ENCODE measurements at regions of chr14 and their contacts with region 1.

Region 1: DNA sequence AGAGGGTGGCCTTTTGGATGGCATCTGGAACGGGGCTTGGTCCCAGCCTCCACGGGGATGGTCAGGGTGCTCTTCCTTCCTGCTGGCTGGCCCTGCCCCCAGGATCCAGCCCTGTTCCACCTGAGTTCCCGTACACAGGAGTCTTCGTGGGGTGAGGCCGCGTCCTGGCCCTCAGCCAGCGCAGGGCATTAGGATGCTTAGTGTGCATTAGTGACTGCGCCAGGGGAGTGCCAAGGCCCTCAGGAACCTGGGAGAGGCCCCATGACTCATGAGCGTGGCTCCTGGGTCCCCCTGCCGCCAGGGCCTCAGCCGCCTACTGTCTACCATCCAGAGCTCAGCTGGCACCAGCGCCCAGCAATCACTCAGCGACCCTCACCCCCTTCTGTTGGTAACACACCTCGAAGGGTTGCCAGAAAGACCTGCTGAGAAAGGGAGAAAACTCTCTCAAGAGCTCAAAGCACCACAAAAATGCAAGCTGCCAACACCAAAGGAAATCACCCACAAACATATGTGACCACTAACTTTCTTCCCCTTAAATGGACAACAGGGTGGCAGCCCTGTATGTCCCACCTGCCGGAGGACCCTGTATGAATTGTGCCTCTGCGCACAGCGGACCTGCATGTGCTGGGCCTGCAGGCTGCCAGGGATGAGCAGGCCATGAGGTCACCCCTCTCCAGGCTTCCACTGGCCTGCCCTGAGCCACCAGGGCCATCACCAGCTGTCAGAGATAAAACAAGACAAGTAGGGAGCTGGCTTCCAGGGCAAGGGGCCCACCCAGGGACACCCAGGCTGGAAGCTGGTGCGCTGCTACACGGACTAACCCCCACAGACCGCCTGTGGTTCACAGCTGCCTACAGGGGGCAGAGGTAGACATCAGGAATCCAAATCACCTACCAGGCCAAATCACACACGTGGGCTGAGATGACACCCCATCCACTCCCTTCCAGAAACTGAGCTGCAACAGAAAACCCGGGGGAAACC is 28.7 kb downstream of the CCDC85C start:
- DNase-seq: peak; percentile 48
- H3K4me3 ChIP-seq: no peak overlapping the region
- H3K27ac ChIP-seq: no peak overlapping the region
- H3K4me1 ChIP-seq: peaks cover 26% of the 10 kb centered on the region
- CTCF ChIP-seq: peak; percentile 70

Region 2: GRCh38 chr14:98835051-98835797 is 740.1 kb before region 1 on chr14:
- CTCF ChIA-PET with region 1: no interaction called
- POLR2A ChIA-PET with region 1: no interaction called
- intact Hi-C with region 1: no loop called
- DNase-seq: no peak
- H3K4me3 ChIP-seq: no peak overlapping the region
- H3K27ac ChIP-seq: no peak overlapping the region
- H3K4me1 ChIP-seq: no peaks in the 10 kb centered on the region
- CTCF ChIP-seq: no peak

Region 3: DNA sequence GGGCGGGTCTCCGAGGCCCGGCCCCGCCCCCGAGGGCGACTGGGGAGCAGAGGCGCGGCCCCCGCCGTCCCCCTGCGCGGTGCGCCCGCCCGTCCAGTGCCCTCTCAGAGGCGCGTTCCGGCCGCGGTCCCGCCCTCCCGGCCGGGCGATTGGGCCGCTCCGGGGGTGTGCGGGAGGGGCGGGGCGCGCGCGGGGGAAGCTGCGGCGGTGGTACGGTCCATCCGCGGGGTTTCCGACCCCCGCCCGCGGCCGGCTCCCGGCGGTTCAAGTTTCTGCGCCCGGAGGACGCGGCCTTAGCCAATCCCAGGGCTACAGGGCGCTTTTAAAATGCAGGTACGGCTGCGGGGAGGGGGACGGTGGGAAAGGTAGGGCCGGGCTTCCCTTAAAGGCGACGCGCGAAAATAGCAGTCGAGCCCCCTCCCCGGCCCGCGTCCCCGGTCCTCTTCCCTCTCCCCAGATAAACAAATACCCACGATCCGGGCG is 29.0 kb after region 1 on chr14:
- CTCF ChIA-PET with region 1: interaction called, 6 read pairs
- POLR2A ChIA-PET with region 1: interaction called, 5 read pairs
- intact Hi-C with region 1: loop called (anchors 2 kb)
- DNase-seq: peak; percentile 97
- H3K4me3 ChIP-seq: peak overlapping the region; percentile 90
- H3K27ac ChIP-seq: peak overlapping the region; percentile 74
- H3K4me1 ChIP-seq: peaks cover 27% of the 10 kb centered on the region
- CTCF ChIP-seq: no peak

Region 4: GRCh38 chr14:99628832-99629618 is 53.7 kb after region 1 on chr14:
- CTCF ChIA-PET with region 1: interaction called, 3 read pairs
- POLR2A ChIA-PET with region 1: no interaction called
- intact Hi-C with region 1: loop called (anchors 2 kb)
- DNase-seq: peak; percentile 66
- H3K4me3 ChIP-seq: no peak overlapping the region
- H3K27ac ChIP-seq: no peak overlapping the region
- H3K4me1 ChIP-seq: peaks cover 21% of the 10 kb centered on the region
- CTCF ChIP-seq: peak; percentile 95

Region 5: GRCh38 chr14:99774556-99775307 is 199.4 kb after region 1 on chr14:
- CTCF ChIA-PET with region 1: no interaction called
- POLR2A ChIA-PET with region 1: no interaction called
- intact Hi-C with region 1: no loop called
- DNase-seq: no peak
- H3K4me3 ChIP-seq: no peak overlapping the region
- H3K27ac ChIP-seq: no peak overlapping the region
- H3K4me1 ChIP-seq: no peaks in the 10 kb centered on the region
- CTCF ChIP-seq: no peak

Region 6: DNA sequence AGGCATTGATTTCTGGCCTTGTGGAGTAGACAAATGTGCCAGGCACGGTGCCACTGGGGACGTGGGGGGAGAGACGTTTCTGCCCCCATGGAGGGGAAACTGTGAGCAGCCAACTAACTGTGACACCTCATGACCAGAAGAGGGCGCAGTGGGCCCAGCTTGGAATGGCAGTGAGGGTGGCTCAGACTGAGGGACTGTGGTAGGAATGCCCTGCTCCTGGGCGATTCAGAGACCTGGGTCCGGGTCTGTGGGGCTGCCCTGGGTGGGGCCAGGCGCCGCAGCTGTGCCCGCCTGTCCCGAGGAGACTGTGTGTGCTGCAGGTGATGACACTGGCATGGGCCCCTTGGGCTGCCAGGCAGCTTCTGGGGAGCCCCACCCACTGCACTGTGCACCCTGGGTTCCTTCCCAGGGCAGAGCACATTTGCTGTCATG is 808.4 kb after region 1 on chr14:
- CTCF ChIA-PET with region 1: no interaction called
- POLR2A ChIA-PET with region 1: no interaction called
- intact Hi-C with region 1: no loop called
- DNase-seq: peak; percentile 65
- H3K4me3 ChIP-seq: no peak overlapping the region
- H3K27ac ChIP-seq: no peak overlapping the region
- H3K4me1 ChIP-seq: no peaks in the 10 kb centered on the region
- CTCF ChIP-seq: peak; percentile 91

Measured in OCI-LY7 (cell line).